T-cell (primary cell): ENCODE measurements at regions of chr2 and their contacts with region 1.

Region 1: GRCh38 chr2:157204401-157204800 is 53.1 kb upstream of the GALNT5 start:
- DNase-seq: no peak
- ATAC-seq: no peak
- H3K4me3 ChIP-seq: no peak overlapping the region
- H3K4me3 Mint-ChIP-seq: no peak overlapping the region
- H3K27ac ChIP-seq: no peak overlapping the region
- H3K27ac Mint-ChIP-seq: no peak overlapping the region
- H3K4me1 ChIP-seq: no peaks in the 10 kb centered on the region
- H3K4me1 Mint-ChIP-seq: no peaks in the 10 kb centered on the region
- H3K27me3 ChIP-seq: peaks cover 0 to 2% of the 10 kb centered on the region in 2 experiments
- H3K27me3 Mint-ChIP-seq: peaks cover 0 to 3% of the 10 kb centered on the region in 2 donors

Region 2: GRCh38 chr2:156562124-156562523 is 642.3 kb before region 1 on chr2:
- CTCF ChIA-PET with region 1: no interaction called
- POLR2A ChIA-PET with region 1: no interaction called
- DNase-seq: no peak
- ATAC-seq: no peak
- H3K4me3 ChIP-seq: no peak overlapping the region
- H3K4me3 Mint-ChIP-seq: no peak overlapping the region
- H3K27ac ChIP-seq: no peak overlapping the region
- H3K27ac Mint-ChIP-seq: no peak overlapping the region
- H3K4me1 ChIP-seq: no peaks in the 10 kb centered on the region
- H3K4me1 Mint-ChIP-seq: no peaks in the 10 kb centered on the region
- H3K27me3 ChIP-seq: no peaks in the 10 kb centered on the region
- H3K27me3 Mint-ChIP-seq: no peaks in the 10 kb centered on the region

Region 3: GRCh38 chr2:157460384-157460837 is 256.0 kb after region 1 on chr2:
- CTCF ChIA-PET with region 1: no interaction called
- POLR2A ChIA-PET with region 1: no interaction called
- DNase-seq: no peak
- ATAC-seq: no peak
- H3K4me3 ChIP-seq: no peak overlapping the region
- H3K4me3 Mint-ChIP-seq: peak overlapping the region in 1 of 3 donors; percentile 37
- H3K27ac ChIP-seq: no peak overlapping the region
- H3K27ac Mint-ChIP-seq: peak overlapping the region; percentile 79 to 80
- H3K4me1 ChIP-seq: peaks cover 26 to 72% of the 10 kb centered on the region in 2 experiments
- H3K4me1 Mint-ChIP-seq: peaks cover 76 to 84% (median 80%) of the 10 kb centered on the region in 3 donors
- H3K27me3 ChIP-seq: no peaks in the 10 kb centered on the region
- H3K27me3 Mint-ChIP-seq: no peaks in the 10 kb centered on the region

Region 4: GRCh38 chr2:157866202-157866601 is 661.8 kb after region 1 on chr2:
- CTCF ChIA-PET with region 1: no interaction called
- POLR2A ChIA-PET with region 1: no interaction called
- DNase-seq: no peak
- ATAC-seq: no peak
- H3K4me3 ChIP-seq: no peak overlapping the region
- H3K4me3 Mint-ChIP-seq: no peak overlapping the region
- H3K27ac ChIP-seq: no peak overlapping the region
- H3K27ac Mint-ChIP-seq: no peak overlapping the region
- H3K4me1 ChIP-seq: no peaks in the 10 kb centered on the region
- H3K4me1 Mint-ChIP-seq: peaks cover 50 to 56% (median 56%) of the 10 kb centered on the region in 3 donors
- H3K27me3 ChIP-seq: no peaks in the 10 kb centered on the region
- H3K27me3 Mint-ChIP-seq: no peaks in the 10 kb centered on the region

Region 5: GRCh38 chr2:158432117-158432516 is 1227.7 kb after region 1 on chr2:
- CTCF ChIA-PET with region 1: no interaction called
- POLR2A ChIA-PET with region 1: no interaction called
- DNase-seq: no peak
- ATAC-seq: no peak
- H3K4me3 ChIP-seq: no peak overlapping the region
- H3K4me3 Mint-ChIP-seq: no peak overlapping the region
- H3K27ac ChIP-seq: no peak overlapping the region
- H3K27ac Mint-ChIP-seq: no peak overlapping the region
- H3K4me1 ChIP-seq: no peaks in the 10 kb centered on the region
- H3K4me1 Mint-ChIP-seq: no peaks in the 10 kb centered on the region
- H3K27me3 ChIP-seq: peaks cover 0 to 5% of the 10 kb centered on the region in 2 experiments
- H3K27me3 Mint-ChIP-seq: peaks cover 6 to 21% of the 10 kb centered on the region in 2 donors

Region 6: DNA sequence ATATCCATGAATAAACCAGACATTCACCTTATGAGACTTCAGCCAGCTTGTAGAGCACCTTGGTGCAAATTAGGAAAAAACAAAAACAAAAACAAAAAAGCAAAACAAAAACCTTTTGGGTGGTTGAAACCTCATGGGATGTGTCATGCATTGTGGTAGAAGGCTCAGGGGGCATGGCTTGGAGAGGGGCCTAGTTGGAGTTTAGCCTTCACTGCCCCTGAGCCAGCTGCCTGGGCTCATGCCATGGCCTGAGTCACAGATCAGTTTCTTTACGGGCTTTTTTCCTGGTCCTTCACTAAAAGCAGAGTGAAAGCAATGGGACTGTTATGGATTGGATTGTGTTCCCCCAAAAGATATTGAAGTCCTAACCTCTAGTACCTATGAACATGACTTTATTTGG is 1568.7 kb after region 1 on chr2:
- CTCF ChIA-PET with region 1: interaction called in 1 of 2 experiments, 11 read pairs
- POLR2A ChIA-PET with region 1: no interaction called
- DNase-seq: no peak
- ATAC-seq: no peak
- H3K4me3 ChIP-seq: no peak overlapping the region
- H3K4me3 Mint-ChIP-seq: no peak overlapping the region
- H3K27ac ChIP-seq: no peak overlapping the region
- H3K27ac Mint-ChIP-seq: no peak overlapping the region
- H3K4me1 ChIP-seq: no peaks in the 10 kb centered on the region
- H3K4me1 Mint-ChIP-seq: no peaks in the 10 kb centered on the region
- H3K27me3 ChIP-seq: peaks cover 0 to 3% of the 10 kb centered on the region in 2 experiments
- H3K27me3 Mint-ChIP-seq: no peaks in the 10 kb centered on the region